Gastrocnemius medialis (tissue), 4 donors: ENCODE measurements at regions of chr14 and their contacts with region 1.

Region 1: DNA sequence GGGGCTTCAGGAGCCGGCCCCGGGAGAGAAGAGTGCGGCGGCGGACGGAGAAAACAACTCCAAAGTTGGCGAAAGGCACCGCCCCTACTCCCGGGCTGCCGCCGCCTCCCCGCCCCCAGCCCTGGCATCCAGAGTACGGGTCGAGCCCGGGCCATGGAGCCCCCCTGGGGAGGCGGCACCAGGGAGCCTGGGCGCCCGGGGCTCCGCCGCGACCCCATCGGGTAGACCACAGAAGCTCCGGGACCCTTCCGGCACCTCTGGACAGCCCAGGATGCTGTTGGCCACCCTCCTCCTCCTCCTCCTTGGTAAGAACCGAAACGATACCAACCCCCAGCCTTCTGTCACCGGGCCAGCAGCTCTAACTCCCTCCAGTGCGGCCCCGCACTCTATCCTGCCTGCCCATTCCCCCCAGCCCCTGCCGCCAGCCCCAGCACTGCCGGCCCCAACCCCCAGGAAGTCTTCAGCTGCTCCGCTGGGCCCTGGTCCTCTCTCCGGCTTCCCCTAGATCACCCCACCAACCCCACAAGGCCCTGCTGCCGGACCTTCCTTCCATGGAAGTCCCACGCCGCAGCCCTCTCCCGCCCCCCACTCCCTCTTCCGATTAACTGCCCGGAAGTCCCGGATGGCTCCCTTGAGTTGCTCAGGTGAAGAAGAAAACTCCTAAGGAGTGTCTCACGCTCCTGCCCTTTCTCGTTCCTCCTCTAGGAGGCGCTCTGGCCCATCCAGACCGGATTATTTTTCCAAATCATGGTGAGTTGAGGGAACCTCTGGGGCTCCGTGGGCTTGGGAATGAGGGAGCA is 693 bp downstream of the LRP10 start:
- DNase-seq: peak; percentile 62 to 79
- ATAC-seq: peak; percentile 72 to 74
- H3K4me3 ChIP-seq: peak overlapping the region; percentile 89 to 100 (median 96)
- H3K27ac ChIP-seq: peak overlapping the region; percentile 98 to 100 (median 99)
- H3K4me1 ChIP-seq: peaks cover 16 to 22% of the 10 kb centered on the region in 2 donors
- H3K27me3 ChIP-seq: no peaks in the 10 kb centered on the region
- CTCF ChIP-seq: peak; percentile 83 to 95 (median 91)
- POLR2A ChIP-seq: peak in 1 of 2 donors; percentile 34

Region 2: DNA sequence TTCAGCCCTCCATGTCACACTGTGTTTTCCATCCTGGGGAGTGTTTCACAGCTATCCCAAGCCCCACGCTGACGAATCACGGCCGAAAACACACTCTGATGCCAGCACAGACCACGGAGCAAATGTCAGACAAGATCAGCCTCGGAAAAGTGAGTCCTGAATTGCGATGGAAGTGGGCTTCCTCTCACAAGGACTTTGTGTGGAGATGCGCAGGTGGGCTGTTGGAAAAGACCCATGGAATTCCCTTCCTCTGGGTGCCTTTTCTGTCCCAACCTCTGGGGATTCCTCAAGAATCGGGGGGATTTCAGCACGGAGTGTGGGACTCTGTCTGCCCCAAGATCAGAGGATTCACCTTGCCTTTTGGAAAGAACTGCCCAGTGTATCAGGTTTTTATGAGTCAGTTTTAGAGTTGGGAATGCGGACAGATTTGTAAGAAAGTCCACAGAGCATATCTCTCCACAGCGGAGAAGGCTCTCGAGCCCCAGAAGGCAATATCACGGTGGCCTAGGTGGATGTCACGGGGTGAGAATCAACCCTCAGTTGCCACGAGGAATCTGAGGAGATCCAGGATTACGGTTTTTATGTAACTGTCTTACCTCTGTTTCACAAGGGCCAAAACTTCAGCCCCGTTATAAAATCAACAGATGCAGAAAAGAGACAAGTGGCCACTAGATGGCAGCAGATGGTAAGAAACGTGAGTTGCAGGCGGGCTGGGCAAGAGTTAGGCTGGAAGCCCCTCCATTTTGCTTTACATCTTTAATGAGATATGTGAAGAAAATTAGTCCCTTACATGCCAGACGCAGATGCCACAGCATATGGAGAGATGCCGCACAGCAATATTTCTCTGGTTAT is 485.1 kb before region 1 on chr14:
- in situ Hi-C with region 1: loop called in 2 of 4 experiments (anchors 25 kb)
- intact Hi-C with region 1: no loop called
- DNase-seq: peak; percentile 12 to 21
- ATAC-seq: peak in 1 of 2 donors; percentile 72
- H3K4me3 ChIP-seq: no peak overlapping the region
- H3K27ac ChIP-seq: no peak overlapping the region
- H3K4me1 ChIP-seq: no peaks in the 10 kb centered on the region
- H3K27me3 ChIP-seq: peaks cover 0 to 10% (median 0%) of the 10 kb centered on the region in 3 donors
- CTCF ChIP-seq: peak; percentile 29 to 77 (median 64)
- POLR2A ChIP-seq: no peak

Region 3: DNA sequence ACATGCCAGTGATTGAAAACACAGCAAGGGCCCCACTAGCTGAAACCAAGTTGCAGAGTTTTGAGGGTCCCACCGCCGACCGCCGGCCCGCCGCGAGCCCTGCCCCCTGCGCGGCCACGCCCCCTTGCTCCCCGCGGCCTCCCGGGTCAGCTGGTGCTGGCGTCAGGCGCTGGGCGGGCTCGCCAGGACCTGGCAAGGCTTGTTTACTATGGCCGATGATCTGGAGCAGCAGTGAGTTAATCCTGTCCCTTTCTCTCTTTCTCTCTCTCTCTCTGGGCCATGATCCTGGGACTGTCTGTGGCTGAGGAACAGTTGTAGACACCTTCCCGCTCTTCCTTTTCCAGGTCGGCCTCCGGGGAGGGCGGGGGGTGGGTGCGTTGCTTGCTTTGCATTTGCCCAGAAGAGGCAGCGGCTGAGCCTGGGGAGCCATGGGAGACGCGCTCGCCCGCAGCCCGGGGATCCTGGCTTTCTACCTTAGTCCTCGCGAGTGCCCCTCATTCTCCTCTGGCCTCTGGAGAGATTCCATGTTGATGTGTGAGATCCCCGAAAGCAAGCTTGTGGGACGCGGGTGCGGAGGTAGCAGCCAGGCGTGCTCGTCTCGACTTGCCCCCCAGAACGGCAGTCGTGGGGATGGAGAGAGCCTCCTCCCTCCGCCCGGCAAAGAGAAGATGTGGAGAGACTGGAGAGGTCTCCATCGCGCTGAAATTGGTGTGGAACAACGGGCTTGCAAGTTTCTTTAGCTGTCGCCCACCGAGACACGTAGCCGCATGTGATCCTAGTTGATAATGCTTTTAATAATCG is 273.9 kb before region 1 on chr14 and contains the start of gene ABHD4:
- in situ Hi-C with region 1: no loop called
- intact Hi-C with region 1: loop called (anchors 2 kb)
- DNase-seq: peak; percentile 74 to 83
- ATAC-seq: peak; percentile 89 to 92
- H3K4me3 ChIP-seq: peak within 1 kb of the TSS; percentile 77 to 91 (median 85)
- H3K27ac ChIP-seq: peak within 1 kb of the TSS; percentile 89 to 98 (median 94)
- H3K4me1 ChIP-seq: peaks cover 21 to 30% of the 10 kb centered on the region in 2 donors
- H3K27me3 ChIP-seq: no peaks in the 10 kb centered on the region
- CTCF ChIP-seq: no peak
- POLR2A ChIP-seq: peak; percentile 80 to 89
- total RNA-seq, gene ABHD4: 17.1 to 38.7 (median 27.6) TPM

Region 4: GRCh38 chr14:22852940-22853767 is 19.1 kb before region 1 on chr14:
- in situ Hi-C with region 1: no loop called
- intact Hi-C with region 1: loop called (anchors 2 kb)
- DNase-seq: peak; percentile 52 to 80
- ATAC-seq: peak; percentile 60 to 66
- H3K4me3 ChIP-seq: peak overlapping the region; percentile 43 to 56 (median 50)
- H3K27ac ChIP-seq: peak overlapping the region in 1 of 4 donors; percentile 32
- H3K4me1 ChIP-seq: peaks cover 40% of the 10 kb centered on the region in 2 donors
- H3K27me3 ChIP-seq: no peaks in the 10 kb centered on the region
- CTCF ChIP-seq: peak; percentile 90 to 98 (median 94)
- POLR2A ChIP-seq: no peak

Region 5: GRCh38 chr14:22908601-22909000 is 36.4 kb after region 1 on chr14:
- in situ Hi-C with region 1: no loop called
- intact Hi-C with region 1: no loop called
- DNase-seq: no peak
- ATAC-seq: no peak
- H3K4me3 ChIP-seq: no peak overlapping the region
- H3K27ac ChIP-seq: no peak overlapping the region
- H3K4me1 ChIP-seq: peaks cover 0 to 14% of the 10 kb centered on the region in 2 donors
- H3K27me3 ChIP-seq: no peaks in the 10 kb centered on the region
- CTCF ChIP-seq: no peak
- POLR2A ChIP-seq: no peak

Region 6: DNA sequence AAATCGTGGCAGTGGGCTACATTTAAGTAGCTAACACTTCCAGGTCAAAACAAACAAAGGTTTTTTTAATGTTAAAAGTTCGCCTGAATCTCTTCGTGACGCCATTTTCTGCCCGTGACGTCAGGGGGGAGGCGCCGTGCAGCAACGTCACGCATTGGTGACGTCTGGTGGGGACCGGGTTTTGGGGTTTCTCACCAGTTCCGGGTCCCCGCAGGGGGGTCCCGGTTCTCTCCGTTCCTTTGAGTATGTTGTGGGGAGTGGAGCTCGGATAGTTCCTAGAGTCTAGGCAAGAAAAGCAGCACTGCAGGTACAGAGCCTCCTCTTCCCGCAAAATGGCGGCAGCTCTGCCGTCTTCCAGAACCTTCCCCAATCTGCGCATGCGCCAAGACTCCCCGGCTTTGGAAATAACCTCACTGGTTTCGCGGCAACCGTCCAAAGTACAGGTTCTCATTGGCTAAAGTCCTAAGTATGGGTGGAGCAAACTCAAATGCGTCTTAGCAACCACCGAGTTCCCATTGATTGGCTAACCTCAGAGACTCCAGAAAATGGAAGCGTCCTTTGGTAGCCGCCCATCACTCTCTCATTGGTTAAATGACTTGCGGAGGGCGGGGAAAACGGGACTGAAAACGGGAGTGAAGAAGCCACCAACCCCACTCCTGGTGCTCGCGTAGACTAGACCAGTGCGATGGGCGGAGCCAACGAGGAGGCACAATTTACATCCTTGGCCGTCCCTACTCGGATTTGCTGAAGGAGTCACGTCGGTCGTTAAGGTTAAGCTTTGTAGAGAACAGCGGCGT is 46.8 kb after region 1 on chr14 and contains the start of gene RBM23:
- in situ Hi-C with region 1: no loop called
- intact Hi-C with region 1: loop called (anchors 5 kb)
- DNase-seq: peak; percentile 99 to 100
- ATAC-seq: peak; percentile 99
- H3K4me3 ChIP-seq: peak within 1 kb of the TSS; percentile 81 to 99 (median 92)
- H3K27ac ChIP-seq: peak within 1 kb of the TSS; percentile 95 to 99 (median 98)
- H3K4me1 ChIP-seq: peaks cover 6 to 26% of the 10 kb centered on the region in 2 donors
- H3K27me3 ChIP-seq: no peaks in the 10 kb centered on the region
- CTCF ChIP-seq: no peak
- POLR2A ChIP-seq: peak; percentile 87 to 88
- total RNA-seq, gene RBM23: 37.7 to 83.3 (median 62.1) TPM

Region 7: GRCh38 chr14:22955702-22956569 is 83.7 kb after region 1 on chr14:
- in situ Hi-C with region 1: no loop called
- intact Hi-C with region 1: loop called (anchors 2 kb)
- DNase-seq: no peak
- ATAC-seq: no peak
- H3K4me3 ChIP-seq: peak overlapping the region; percentile 71 to 82 (median 82)
- H3K27ac ChIP-seq: peak overlapping the region; percentile 90 to 95 (median 94)
- H3K4me1 ChIP-seq: peaks cover 9 to 17% of the 10 kb centered on the region in 2 donors
- H3K27me3 ChIP-seq: no peaks in the 10 kb centered on the region
- CTCF ChIP-seq: no peak
- POLR2A ChIP-seq: no peak